Esophagus squamous epithelium (tissue), 5 donors: ENCODE measurements at regions of chr2 and their contacts with region 1.

Region 1: GRCh38 chr2:39513641-39514094 is 76.6 kb upstream of the MAP4K3 start:
- DNase-seq: no peak
- H3K4me3 ChIP-seq: no peak overlapping the region
- H3K27ac ChIP-seq: peak overlapping the region in 3 of 4 donors; percentile 57 to 80 (median 73)
- H3K4me1 ChIP-seq: peaks cover 0 to 66% (median 34%) of the 10 kb centered on the region in 3 donors
- H3K27me3 ChIP-seq: no peaks in the 10 kb centered on the region
- CTCF ChIP-seq: peak; percentile 32 to 73 (median 44)
- POLR2A ChIP-seq: no peak

Region 2: GRCh38 chr2:39394516-39394961 is 119.1 kb before region 1 on chr2:
- intact Hi-C with region 1: loop called (anchors 10 kb)
- DNase-seq: no peak
- H3K4me3 ChIP-seq: no peak overlapping the region
- H3K27ac ChIP-seq: no peak overlapping the region
- H3K4me1 ChIP-seq: peaks cover 0 to 28% (median 4%) of the 10 kb centered on the region in 3 donors
- H3K27me3 ChIP-seq: no peaks in the 10 kb centered on the region
- CTCF ChIP-seq: no peak
- POLR2A ChIP-seq: no peak

Region 3: GRCh38 chr2:39665811-39666490 is 152.3 kb after region 1 on chr2 and contains the start of gene TMEM178A:
- intact Hi-C with region 1: no loop called
- DNase-seq: no peak
- H3K4me3 ChIP-seq: peak within 1 kb of the TSS; percentile 28 to 64 (median 48)
- H3K27ac ChIP-seq: no peak within 1 kb of the TSS
- H3K4me1 ChIP-seq: peaks cover 0 to 20% (median 9%) of the 10 kb centered on the region in 3 donors
- H3K27me3 ChIP-seq: peaks cover 0 to 62% (median 10%) of the 10 kb centered on the region in 4 donors
- CTCF ChIP-seq: no peak
- POLR2A ChIP-seq: no peak
- total RNA-seq, gene TMEM178A: 0.29 to 0.38 TPM in 2 of 4 donors, not detected in the others

Region 4: DNA sequence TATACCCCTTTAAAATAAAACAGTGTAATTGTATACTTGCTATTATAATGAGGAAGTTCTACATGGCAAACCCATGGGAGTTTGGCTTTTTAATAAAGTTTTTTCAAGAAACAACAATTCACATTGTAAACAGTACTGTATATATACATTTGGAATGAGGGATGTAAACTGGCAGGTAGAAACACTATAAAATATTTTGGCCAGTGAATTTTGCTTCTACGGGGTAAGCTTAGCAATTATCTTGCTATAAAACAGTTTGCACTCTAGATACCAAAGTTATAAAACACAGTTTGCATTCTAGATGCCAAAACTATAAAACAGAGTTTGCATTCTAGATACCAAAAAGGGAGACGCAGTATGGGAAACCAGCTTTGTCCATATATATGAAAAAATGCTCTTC is 248.8 kb after region 1 on chr2:
- intact Hi-C with region 1: no loop called
- DNase-seq: no peak
- H3K4me3 ChIP-seq: no peak overlapping the region
- H3K27ac ChIP-seq: no peak overlapping the region
- H3K4me1 ChIP-seq: no peaks in the 10 kb centered on the region
- H3K27me3 ChIP-seq: no peaks in the 10 kb centered on the region
- CTCF ChIP-seq: no peak
- POLR2A ChIP-seq: no peak